Right lobe of liver (tissue), 6 donors: ENCODE measurements at regions of chr11 and their contacts with region 1.

Region 1: GRCh38 chr11:20102397-20102796 is 57.9 kb downstream of the DBX1 start:
- DNase-seq: no peak
- ATAC-seq: no peak
- H3K4me3 ChIP-seq: no peak overlapping the region
- H3K27ac ChIP-seq: no peak overlapping the region
- H3K4me1 ChIP-seq: peaks cover 0 to 3% (median 0%) of the 10 kb centered on the region in 4 donors
- H3K27me3 ChIP-seq: no peaks in the 10 kb centered on the region
- CTCF ChIP-seq: no peak
- POLR2A ChIP-seq: no peak

Region 2: GRCh38 chr11:19951558-19952115 is 150.8 kb before region 1 on chr11:
- intact Hi-C with region 1: loop called (anchors 10 kb)
- DNase-seq: no peak
- ATAC-seq: peak; percentile 52 to 63 (median 60)
- H3K4me3 ChIP-seq: no peak overlapping the region
- H3K27ac ChIP-seq: peak overlapping the region in 1 of 3 donors; percentile 41
- H3K4me1 ChIP-seq: peaks cover 0 to 27% (median 13%) of the 10 kb centered on the region in 4 donors
- H3K27me3 ChIP-seq: no peaks in the 10 kb centered on the region
- CTCF ChIP-seq: peak; percentile 59 to 86 (median 62)
- POLR2A ChIP-seq: no peak